ENCODE measurements at regions of chr12 and their contacts with region 1.

Region 1: DNA sequence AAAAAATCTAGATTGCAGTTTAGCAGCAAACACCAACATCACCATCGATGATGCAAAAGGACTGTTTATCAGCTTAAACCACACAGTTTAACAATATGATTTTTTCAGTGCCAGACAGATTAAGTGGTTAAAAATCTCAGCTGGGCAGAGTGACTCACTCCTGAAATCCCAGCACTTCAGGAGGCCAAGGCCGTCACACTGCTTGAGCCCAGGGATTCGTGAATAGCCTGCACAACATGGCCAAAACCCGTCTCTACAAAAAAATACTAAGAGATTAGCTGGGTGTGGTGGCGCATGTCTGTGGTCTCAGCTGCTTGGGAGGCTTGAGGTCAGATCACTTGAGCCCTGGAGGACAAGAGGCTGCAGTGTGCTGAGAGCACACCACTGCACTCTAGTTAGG is 8.9 kb downstream of the RSRC2 start:
- DNase-seq: no peak
- H3K4me3 ChIP-seq: no peak overlapping the region
- H3K27ac ChIP-seq: no peak overlapping the region
- H3K4me1 ChIP-seq: peaks cover 0 to 8% of the 10 kb centered on the region in 2 donors
- H3K27me3 ChIP-seq: no peaks in the 10 kb centered on the region
- CTCF ChIP-seq: no peak
- POLR2A ChIP-seq: no peak

Region 2: GRCh38 chr12:121875582-121875981 is 642.3 kb before region 1 on chr12:
- intact Hi-C with region 1: loop called (anchors 5 kb)
- DNase-seq: no peak
- H3K4me3 ChIP-seq: no peak overlapping the region
- H3K27ac ChIP-seq: no peak overlapping the region
- H3K4me1 ChIP-seq: no peaks in the 10 kb centered on the region
- H3K27me3 ChIP-seq: no peaks in the 10 kb centered on the region
- CTCF ChIP-seq: no peak
- POLR2A ChIP-seq: no peak

Region 3: DNA sequence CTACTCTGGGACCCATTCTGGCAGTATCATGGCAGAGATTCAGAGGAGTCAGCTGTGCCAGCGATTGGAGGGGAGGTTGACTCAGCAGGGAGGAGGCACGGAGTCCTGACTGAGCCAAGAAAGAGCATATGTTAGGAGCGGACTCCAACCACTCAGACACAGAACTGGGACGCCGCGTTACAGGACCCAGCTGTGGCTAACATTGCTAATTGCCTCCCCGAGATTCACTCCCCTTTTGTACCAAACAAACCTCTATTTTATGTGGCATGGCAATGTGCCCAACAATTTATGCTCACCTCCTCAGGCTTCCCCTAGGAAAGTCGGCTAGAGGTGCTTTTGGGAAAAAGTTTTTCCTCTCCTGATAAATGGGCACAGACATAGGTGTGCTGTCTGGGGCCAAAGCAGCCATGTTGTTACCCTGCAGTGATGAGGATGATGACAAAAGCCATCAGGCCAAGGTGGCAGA is 80.2 kb before region 1 on chr12:
- intact Hi-C with region 1: loop called (anchors 2 kb)
- DNase-seq: peak in 1 of 2 donors; percentile 47
- H3K4me3 ChIP-seq: peak overlapping the region in 1 of 3 donors; percentile 0
- H3K27ac ChIP-seq: peak overlapping the region; percentile 23 to 54
- H3K4me1 ChIP-seq: no peaks in the 10 kb centered on the region
- H3K27me3 ChIP-seq: no peaks in the 10 kb centered on the region
- CTCF ChIP-seq: no peak
- POLR2A ChIP-seq: no peak

Region 4: DNA sequence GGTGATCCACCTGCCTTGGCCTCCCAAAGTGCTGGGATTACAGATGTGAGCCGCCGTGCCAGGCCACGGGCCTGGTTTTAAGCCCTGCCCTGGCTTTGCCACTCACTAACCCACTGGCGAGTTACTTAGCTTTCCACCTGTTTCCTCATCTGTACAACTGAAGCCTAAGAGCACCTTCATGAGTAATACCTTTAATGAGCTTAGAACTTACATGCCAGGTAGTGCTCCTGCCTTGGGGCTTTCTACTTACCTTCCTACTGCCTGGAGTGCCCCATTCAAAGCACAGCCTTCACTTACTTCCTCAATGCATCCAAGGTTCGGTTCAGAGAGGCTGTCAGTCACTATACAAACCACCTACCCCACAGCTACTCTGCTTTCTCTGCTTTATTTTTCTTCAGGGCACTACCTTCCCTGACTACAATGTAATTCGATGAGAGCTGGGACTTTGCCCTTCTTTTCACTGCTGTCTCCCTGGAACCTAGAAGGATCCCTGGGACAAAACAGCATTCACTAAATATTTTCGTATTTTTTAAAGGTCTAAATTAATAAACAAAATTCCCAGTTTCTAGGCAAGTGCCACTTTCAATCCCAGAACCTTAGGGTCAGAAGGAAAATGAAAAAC is 31.0 kb before region 1 on chr12:
- intact Hi-C with region 1: no loop called
- DNase-seq: no peak
- H3K4me3 ChIP-seq: no peak overlapping the region
- H3K27ac ChIP-seq: no peak overlapping the region
- H3K4me1 ChIP-seq: no peaks in the 10 kb centered on the region
- H3K27me3 ChIP-seq: no peaks in the 10 kb centered on the region
- CTCF ChIP-seq: no peak
- POLR2A ChIP-seq: no peak

Region 5: DNA sequence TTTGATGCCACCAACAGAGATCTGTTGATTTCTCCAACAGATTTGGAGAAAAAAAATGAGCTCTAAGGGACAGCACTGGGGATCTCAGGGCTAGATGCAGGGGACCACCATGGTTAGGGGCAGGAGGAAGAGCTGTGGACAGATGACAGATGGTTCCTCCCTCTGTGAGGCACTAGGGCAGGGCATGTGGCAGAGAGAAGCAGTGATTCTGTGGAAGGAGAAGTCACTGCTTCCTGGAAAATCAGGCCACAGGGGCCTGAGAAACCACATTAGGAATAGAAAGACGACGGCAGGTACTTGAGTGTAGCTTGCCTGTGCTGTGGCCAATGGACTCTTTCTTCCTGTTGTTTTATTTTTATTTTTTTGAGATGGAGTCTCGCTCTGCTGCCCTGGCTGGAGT is 1041.6 kb after region 1 on chr12:
- intact Hi-C with region 1: no loop called
- DNase-seq: no peak
- H3K4me3 ChIP-seq: no peak overlapping the region
- H3K27ac ChIP-seq: no peak overlapping the region
- H3K4me1 ChIP-seq: no peaks in the 10 kb centered on the region
- H3K27me3 ChIP-seq: no peaks in the 10 kb centered on the region
- CTCF ChIP-seq: no peak
- POLR2A ChIP-seq: no peak

Measured in breast epithelium (tissue), 4 donors.